ENCODE measurements at regions of chrX and their contacts with region 1.

Region 1: GRCh38 chrX:26783512-26784225 is 567.7 kb downstream of the MAGEB5 start:
- DNase-seq: peak; percentile 87
- H3K4me3 ChIP-seq: no peak overlapping the region
- H3K27ac ChIP-seq: peak overlapping the region; percentile 87
- H3K4me1 ChIP-seq: peaks cover 19% of the 10 kb centered on the region
- H3K27me3 ChIP-seq: no peaks in the 10 kb centered on the region
- CTCF ChIP-seq: peak; percentile 33 to 50
- POLR2A ChIP-seq: no peak

Region 2: DNA sequence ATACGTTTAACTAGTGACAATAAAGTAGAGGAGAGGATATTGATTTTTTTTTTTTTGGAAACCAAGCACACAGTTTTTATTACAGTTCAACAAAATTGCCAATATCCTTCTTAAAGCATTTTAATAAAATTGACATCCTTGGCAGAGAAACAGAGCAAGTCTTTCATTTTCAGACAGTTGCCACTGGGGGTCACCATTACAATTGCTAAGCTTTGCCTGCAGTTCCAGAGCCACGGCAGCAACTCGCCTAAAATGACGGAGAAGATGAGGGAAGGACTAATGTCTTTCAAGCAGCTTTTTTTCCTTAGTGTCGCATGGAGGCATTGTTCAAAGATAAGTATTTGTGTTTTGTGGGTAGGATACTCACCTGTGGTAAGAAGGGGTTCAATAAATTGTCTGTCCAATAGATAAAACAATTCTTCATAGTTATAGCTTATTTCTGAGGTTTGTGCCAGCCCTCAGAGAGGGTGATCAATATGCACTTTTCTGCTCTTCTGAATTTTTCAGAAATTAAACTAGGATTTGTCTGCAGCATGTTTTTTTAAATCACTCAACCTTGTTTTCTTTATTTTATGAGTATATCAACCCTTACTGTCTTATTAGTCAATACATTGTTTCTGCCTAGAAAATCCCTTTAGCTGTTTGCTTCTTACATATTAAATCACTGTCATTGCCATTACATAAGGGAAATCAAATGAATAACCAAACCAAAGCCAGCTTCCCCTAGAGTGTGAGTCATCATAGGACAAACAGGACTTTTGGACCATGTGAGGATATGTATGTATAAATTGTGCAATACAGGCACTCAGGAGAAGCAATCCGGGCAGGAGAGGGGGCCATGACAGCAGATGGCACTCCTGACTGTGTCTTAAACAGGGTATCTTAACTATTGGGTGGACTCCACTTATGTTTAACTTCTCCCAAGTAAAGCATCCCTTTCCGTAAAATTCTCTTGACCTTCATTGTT is 1259.8 kb before region 1 on chrX:
- CTCF ChIA-PET with region 1: no interaction called
- POLR2A ChIA-PET with region 1: no interaction called
- dilution Hi-C with region 1: no loop called
- intact Hi-C with region 1: loop called (anchors 2 kb)
- DNase-seq: peak; percentile 90
- H3K4me3 ChIP-seq: peak overlapping the region in 2 of 3 experiments; percentile 13 to 43
- H3K27ac ChIP-seq: peak overlapping the region; percentile 90
- H3K4me1 ChIP-seq: peaks cover 22% of the 10 kb centered on the region
- H3K27me3 ChIP-seq: no peaks in the 10 kb centered on the region
- CTCF ChIP-seq: peak; percentile 30 to 35
- POLR2A ChIP-seq: no peak

Region 3: GRCh38 chrX:26262121-26262523 is 521.5 kb before region 1 on chrX:
- CTCF ChIA-PET with region 1: no interaction called
- POLR2A ChIA-PET with region 1: no interaction called
- dilution Hi-C with region 1: no loop called
- intact Hi-C with region 1: loop called (anchors 1 kb)
- DNase-seq: peak; percentile 91
- H3K4me3 ChIP-seq: no peak overlapping the region
- H3K27ac ChIP-seq: peak overlapping the region; percentile 99
- H3K4me1 ChIP-seq: peaks cover 23% of the 10 kb centered on the region
- H3K27me3 ChIP-seq: no peaks in the 10 kb centered on the region
- CTCF ChIP-seq: no peak
- POLR2A ChIP-seq: peak; percentile 41

Region 4: GRCh38 chrX:26918633-26919032 is 135.0 kb after region 1 on chrX:
- CTCF ChIA-PET with region 1: interaction called, 3 read pairs
- POLR2A ChIA-PET with region 1: no interaction called
- dilution Hi-C with region 1: no loop called
- intact Hi-C with region 1: loop called (anchors 1 kb)
- DNase-seq: peak; percentile 31
- H3K4me3 ChIP-seq: no peak overlapping the region
- H3K27ac ChIP-seq: no peak overlapping the region
- H3K4me1 ChIP-seq: peaks cover 36% of the 10 kb centered on the region
- H3K27me3 ChIP-seq: no peaks in the 10 kb centered on the region
- CTCF ChIP-seq: peak; percentile 17 to 26
- POLR2A ChIP-seq: no peak

Region 5: DNA sequence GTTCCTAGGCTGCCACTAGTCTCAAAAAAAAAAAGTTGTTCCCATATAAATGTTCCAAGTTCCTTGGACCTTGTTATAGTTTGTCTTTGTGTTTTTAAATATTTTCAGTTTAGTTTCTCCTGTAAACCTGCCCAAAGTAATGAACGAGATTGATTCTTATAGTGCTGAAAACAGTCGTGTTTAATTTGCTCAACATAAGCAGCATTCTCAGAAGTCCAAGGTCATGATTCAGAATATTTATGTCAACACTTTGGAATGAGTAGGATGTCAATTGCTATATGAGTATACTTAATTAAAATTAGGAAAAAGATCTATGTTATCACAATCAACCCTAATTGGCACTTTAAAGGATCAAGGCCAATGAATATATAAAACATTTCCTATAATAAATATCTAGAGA is 168.5 kb after region 1 on chrX:
- CTCF ChIA-PET with region 1: no interaction called
- POLR2A ChIA-PET with region 1: no interaction called
- dilution Hi-C with region 1: no loop called
- intact Hi-C with region 1: no loop called
- DNase-seq: peak; percentile 40
- H3K4me3 ChIP-seq: no peak overlapping the region
- H3K27ac ChIP-seq: peak overlapping the region; percentile 29
- H3K4me1 ChIP-seq: peaks cover 10% of the 10 kb centered on the region
- H3K27me3 ChIP-seq: no peaks in the 10 kb centered on the region
- CTCF ChIP-seq: no peak
- POLR2A ChIP-seq: no peak

Region 6: GRCh38 chrX:27309406-27309805 is 525.7 kb after region 1 on chrX:
- CTCF ChIA-PET with region 1: interaction called, 5 read pairs
- POLR2A ChIA-PET with region 1: interaction called, 3 read pairs
- dilution Hi-C with region 1: no loop called
- intact Hi-C with region 1: loop called (anchors 2 kb)
- DNase-seq: peak; percentile 89
- H3K4me3 ChIP-seq: no peak overlapping the region
- H3K27ac ChIP-seq: peak overlapping the region; percentile 77
- H3K4me1 ChIP-seq: peaks cover 21% of the 10 kb centered on the region
- H3K27me3 ChIP-seq: no peaks in the 10 kb centered on the region
- CTCF ChIP-seq: no peak
- POLR2A ChIP-seq: no peak

Region 7: DNA sequence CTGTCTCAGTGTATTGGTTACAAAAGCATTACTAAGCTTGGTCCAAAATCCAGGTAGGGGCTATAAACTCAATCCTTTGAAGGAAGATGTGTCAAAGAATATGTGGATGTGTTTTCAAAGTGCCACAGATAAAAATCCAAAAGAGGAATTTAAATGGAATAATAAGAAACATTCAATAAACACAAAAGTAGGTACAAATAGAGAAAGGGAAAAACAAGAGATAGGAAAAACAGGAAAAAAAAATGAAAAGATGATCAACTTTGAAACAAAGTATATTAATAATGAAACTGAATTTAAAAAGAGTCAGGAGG is 615.4 kb after region 1 on chrX:
- CTCF ChIA-PET with region 1: no interaction called
- POLR2A ChIA-PET with region 1: no interaction called
- dilution Hi-C with region 1: no loop called
- intact Hi-C with region 1: loop called (anchors 1 kb)
- DNase-seq: no peak
- H3K4me3 ChIP-seq: no peak overlapping the region
- H3K27ac ChIP-seq: no peak overlapping the region
- H3K4me1 ChIP-seq: no peaks in the 10 kb centered on the region
- H3K27me3 ChIP-seq: no peaks in the 10 kb centered on the region
- CTCF ChIP-seq: no peak
- POLR2A ChIP-seq: no peak

Region 8: GRCh38 chrX:27679281-27679680 is 895.6 kb after region 1 on chrX:
- CTCF ChIA-PET with region 1: no interaction called
- POLR2A ChIA-PET with region 1: no interaction called
- dilution Hi-C with region 1: no loop called
- intact Hi-C with region 1: loop called (anchors 5 kb)
- DNase-seq: peak; percentile 72
- H3K4me3 ChIP-seq: no peak overlapping the region
- H3K27ac ChIP-seq: no peak overlapping the region
- H3K4me1 ChIP-seq: no peaks in the 10 kb centered on the region
- H3K27me3 ChIP-seq: no peaks in the 10 kb centered on the region
- CTCF ChIP-seq: no peak
- POLR2A ChIP-seq: no peak

Measured in endothelial cell of umbilical vein (primary cell).